Heart left ventricle (tissue), 16 donors: ENCODE measurements at regions of chr16 and their contacts with region 1.

Region 1: DNA sequence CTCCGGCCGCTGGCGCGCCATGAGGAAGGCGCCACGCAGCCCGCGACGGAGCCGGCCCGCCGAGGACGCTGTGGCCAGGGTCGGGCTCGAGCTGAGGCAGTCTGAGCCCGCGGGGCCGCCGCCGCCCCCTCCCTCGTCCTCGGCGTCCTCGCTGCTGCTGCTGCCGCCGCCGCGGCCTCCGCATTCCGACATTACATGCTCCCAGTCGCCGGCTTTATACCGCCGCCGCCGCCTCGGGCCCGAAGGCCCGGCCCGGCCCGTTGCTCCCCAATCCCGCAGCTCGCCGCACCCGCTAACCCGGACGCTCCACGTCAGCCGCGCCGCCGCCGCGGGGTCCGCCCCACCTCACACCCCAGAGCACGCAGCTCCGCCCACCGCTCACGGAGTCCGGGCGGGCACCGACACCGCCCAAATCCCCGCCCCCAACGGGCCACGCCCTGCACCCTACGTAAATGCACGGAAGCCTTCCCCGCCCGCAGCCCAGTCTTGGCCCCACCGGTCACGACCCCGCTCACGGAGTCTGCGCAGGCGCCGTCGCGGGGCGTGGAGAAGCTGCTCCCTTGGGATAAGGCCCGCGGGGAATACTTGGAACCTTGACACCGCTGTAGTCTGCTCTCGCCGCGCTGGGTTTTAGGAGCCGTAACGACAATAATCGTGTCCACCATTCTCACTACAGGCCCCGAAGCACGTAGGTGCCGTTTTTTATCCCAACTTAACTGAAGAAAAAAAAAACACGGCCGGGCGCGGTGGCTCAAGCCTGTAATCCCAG is at the start of gene TXNDC11:
- DNase-seq: peak; percentile 99 to 100 (median 99)
- ATAC-seq: peak; percentile 98 to 100 (median 98)
- H3K4me3 ChIP-seq: peak within 1 kb of the TSS; percentile 68 to 98 (median 94)
- H3K27ac ChIP-seq: peak within 1 kb of the TSS; percentile 93 to 99 (median 98)
- H3K4me1 ChIP-seq: peaks cover 5 to 49% (median 32%) of the 10 kb centered on the region in 12 donors
- H3K27me3 ChIP-seq: no peaks in the 10 kb centered on the region
- CTCF ChIP-seq: no peak
- POLR2A ChIP-seq: peak; percentile 98 to 99
- total RNA-seq, gene TXNDC11: 18.9 to 29.3 (median 25.9) TPM

Region 2: GRCh38 chr16:11452746-11453389 is 289.9 kb before region 1 on chr16:
- intact Hi-C with region 1: no loop called
- DNase-seq: no peak
- ATAC-seq: no peak
- H3K4me3 ChIP-seq: no peak overlapping the region
- H3K27ac ChIP-seq: peak overlapping the region in 4 of 12 donors; percentile 23 to 53 (median 44)
- H3K4me1 ChIP-seq: peaks cover 0 to 7% (median 0%) of the 10 kb centered on the region in 12 donors
- H3K27me3 ChIP-seq: no peaks in the 10 kb centered on the region
- CTCF ChIP-seq: no peak
- POLR2A ChIP-seq: no peak

Region 3: GRCh38 chr16:11667824-11668622 is 74.7 kb before region 1 on chr16 and contains the start of gene SNN:
- intact Hi-C with region 1: loop called in 1 of 10 experiments (anchors 2 kb)
- DNase-seq: peak; percentile 90 to 96 (median 92)
- ATAC-seq: peak; percentile 84 to 93 (median 90)
- H3K4me3 ChIP-seq: peak within 1 kb of the TSS; percentile 70 to 100 (median 90)
- H3K27ac ChIP-seq: peak within 1 kb of the TSS; percentile 47 to 90 (median 84)
- H3K4me1 ChIP-seq: peaks cover 3 to 64% (median 47%) of the 10 kb centered on the region in 12 donors
- H3K27me3 ChIP-seq: no peaks in the 10 kb centered on the region
- CTCF ChIP-seq: no peak
- POLR2A ChIP-seq: no peak
- total RNA-seq, gene SNN: 17.0 to 60.0 (median 36.4) TPM

Region 4: DNA sequence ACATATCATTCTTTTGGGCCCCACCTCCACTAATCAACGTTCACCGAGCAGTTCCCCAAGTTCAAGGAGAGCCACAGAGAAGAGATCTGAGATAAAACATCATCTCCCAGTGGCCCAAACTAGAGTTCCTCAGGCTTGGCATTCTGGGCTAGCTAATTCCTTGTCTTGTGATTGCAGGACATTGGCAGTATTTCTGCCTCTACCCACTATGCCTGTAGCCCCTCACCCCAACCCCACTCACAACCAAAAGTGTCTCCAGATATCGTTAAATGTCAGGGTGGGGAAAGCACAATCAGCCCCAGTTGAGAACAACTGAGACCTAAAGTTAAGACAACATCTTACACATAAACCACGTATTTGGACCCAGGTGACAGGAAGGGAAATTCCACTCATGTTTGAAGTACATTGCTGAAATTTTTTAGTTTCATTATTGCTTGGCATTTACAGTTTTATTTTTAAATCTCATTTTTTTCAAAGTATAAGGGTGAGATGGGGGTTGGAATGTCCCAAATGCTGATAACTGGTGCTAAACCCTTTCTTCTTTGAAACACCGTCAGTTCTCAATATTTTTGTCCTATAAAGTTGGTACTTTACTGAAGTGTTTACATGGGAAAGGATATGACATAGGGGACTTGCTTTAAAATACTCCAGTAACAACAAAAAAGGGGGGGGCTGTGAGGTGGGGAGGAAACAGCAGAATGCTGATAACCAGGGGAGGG is 40.8 kb after region 1 on chr16:
- intact Hi-C with region 1: loop called in 2 of 10 experiments (anchors 5 kb)
- DNase-seq: no peak
- ATAC-seq: peak; percentile 12 to 50 (median 26)
- H3K4me3 ChIP-seq: peak overlapping the region in 10 of 12 donors; percentile 6 to 41 (median 25)
- H3K27ac ChIP-seq: peak overlapping the region; percentile 48 to 93 (median 80)
- H3K4me1 ChIP-seq: peaks cover 9 to 75% (median 38%) of the 10 kb centered on the region in 12 donors
- H3K27me3 ChIP-seq: no peaks in the 10 kb centered on the region
- CTCF ChIP-seq: no peak
- POLR2A ChIP-seq: no peak

Region 5: DNA sequence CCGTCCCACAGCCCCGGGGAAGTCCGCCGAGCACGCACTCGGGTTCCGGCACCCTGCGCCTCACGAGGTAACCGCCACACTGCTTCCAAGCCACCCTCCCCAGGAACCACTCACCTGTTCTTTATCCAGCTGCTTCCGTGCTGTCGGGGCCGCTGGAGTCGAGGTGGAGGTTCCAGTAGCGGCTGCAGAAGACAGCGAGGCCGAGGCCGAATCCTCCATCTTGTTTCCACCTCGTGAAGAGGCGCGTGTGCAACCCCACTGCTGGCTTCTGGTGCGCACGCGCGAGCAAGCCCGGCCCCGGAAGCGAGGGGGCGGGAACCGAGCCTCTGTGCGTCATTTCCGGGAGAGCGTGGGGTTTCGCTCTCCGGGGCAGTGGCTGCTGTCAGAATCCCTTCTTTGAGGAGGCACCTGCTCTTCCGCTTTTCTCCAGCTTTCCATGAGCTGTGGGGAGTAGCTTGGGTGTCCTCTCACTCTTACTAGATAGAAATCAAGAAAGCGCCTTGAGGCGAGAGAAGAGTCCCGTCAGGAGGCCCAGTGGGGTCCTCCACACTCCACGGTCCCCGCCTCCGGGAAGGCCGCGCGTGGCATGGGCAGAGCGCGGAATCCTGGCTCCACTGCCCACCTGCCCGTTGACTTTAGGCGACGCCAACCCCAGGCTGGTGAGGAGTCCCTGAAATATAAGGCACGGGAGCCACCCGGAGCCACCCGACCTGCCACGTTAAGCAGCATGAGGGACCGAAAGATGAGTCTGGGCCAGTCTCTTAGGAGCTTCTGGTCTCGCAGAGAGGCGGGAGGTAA is 108.8 kb after region 1 on chr16 and contains the start of gene RSL1D1:
- intact Hi-C with region 1: loop called in 2 of 10 experiments (anchors 10 kb)
- DNase-seq: peak; percentile 92 to 95 (median 93)
- ATAC-seq: peak; percentile 97 to 99 (median 98)
- H3K4me3 ChIP-seq: peak within 1 kb of the TSS; percentile 59 to 98 (median 77)
- H3K27ac ChIP-seq: peak within 1 kb of the TSS; percentile 49 to 89 (median 86)
- H3K4me1 ChIP-seq: peaks cover 2 to 50% (median 33%) of the 10 kb centered on the region in 12 donors
- H3K27me3 ChIP-seq: no peaks in the 10 kb centered on the region
- CTCF ChIP-seq: no peak
- POLR2A ChIP-seq: peak in 1 of 2 donors; percentile 88
- total RNA-seq, gene RSL1D1: 81.4 to 125 (median 92.3) TPM

Region 6: GRCh38 chr16:11901091-11901490 is 158.4 kb after region 1 on chr16:
- intact Hi-C with region 1: no loop called
- DNase-seq: no peak
- ATAC-seq: peak in 1 of 4 donors; percentile 47
- H3K4me3 ChIP-seq: no peak overlapping the region
- H3K27ac ChIP-seq: no peak overlapping the region
- H3K4me1 ChIP-seq: peaks cover 0 to 31% (median 7%) of the 10 kb centered on the region in 12 donors
- H3K27me3 ChIP-seq: no peaks in the 10 kb centered on the region
- CTCF ChIP-seq: no peak
- POLR2A ChIP-seq: no peak